PC-9 (cell line): ENCODE measurements at regions of chr5 and their contacts with region 1.

Region 1: GRCh38 chr5:52915176-52915875 is 73.8 kb upstream of the ITGA2 start:
- DNase-seq: peak; percentile 53 to 58
- H3K4me3 ChIP-seq: peak overlapping the region; percentile 53; the same call in 1 of the 2 replicates
- H3K27ac ChIP-seq: no peak overlapping the region
- H3K4me1 ChIP-seq: no peaks in the 10 kb centered on the region
- H3K27me3 ChIP-seq: no peaks in the 10 kb centered on the region
- CTCF ChIP-seq: peak; percentile 91

Region 2: GRCh38 chr5:52693280-52693679 is 222.0 kb before region 1 on chr5:
- CTCF ChIA-PET with region 1: no interaction called
- POLR2A ChIA-PET with region 1: no interaction called
- intact Hi-C with region 1: loop called (anchors 1 kb)
- DNase-seq: no peak
- H3K4me3 ChIP-seq: no peak overlapping the region
- H3K27ac ChIP-seq: no peak overlapping the region
- H3K4me1 ChIP-seq: no peaks in the 10 kb centered on the region
- H3K27me3 ChIP-seq: no peaks in the 10 kb centered on the region
- CTCF ChIP-seq: peak; percentile 51

Region 3: DNA sequence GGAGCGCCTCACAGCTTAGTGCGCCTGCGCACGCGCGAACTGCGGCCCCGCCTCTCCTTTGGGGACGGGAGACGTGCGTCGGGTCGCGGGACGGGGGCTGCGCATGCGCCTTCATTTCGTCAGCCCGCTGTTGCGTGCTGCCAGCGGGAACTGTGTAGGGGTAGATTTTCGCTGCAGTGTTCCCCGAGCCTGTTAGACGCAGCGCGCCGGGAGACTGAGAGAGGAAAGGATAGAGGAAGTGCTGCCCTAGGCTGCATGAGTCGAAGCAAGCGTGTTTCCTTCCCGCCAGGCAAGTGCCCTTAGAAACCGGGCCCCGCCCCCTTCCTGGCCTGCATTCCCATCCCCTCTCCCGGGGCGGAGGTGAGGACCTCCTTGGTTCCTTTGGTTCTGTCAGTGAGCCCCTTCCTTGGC is 115.3 kb before region 1 on chr5:
- CTCF ChIA-PET with region 1: interaction called, 8 read pairs
- POLR2A ChIA-PET with region 1: no interaction called
- intact Hi-C with region 1: loop called (anchors 5 kb)
- DNase-seq: peak; percentile 81 to 93
- H3K4me3 ChIP-seq: peak overlapping the region; percentile 68
- H3K27ac ChIP-seq: peak overlapping the region; percentile 99
- H3K4me1 ChIP-seq: peaks cover 39% of the 10 kb centered on the region
- H3K27me3 ChIP-seq: no peaks in the 10 kb centered on the region
- CTCF ChIP-seq: no peak